Posterior cingulate gyrus (tissue), 11 donors: ENCODE measurements at regions of chr6 and their contacts with region 1.

Region 1: DNA sequence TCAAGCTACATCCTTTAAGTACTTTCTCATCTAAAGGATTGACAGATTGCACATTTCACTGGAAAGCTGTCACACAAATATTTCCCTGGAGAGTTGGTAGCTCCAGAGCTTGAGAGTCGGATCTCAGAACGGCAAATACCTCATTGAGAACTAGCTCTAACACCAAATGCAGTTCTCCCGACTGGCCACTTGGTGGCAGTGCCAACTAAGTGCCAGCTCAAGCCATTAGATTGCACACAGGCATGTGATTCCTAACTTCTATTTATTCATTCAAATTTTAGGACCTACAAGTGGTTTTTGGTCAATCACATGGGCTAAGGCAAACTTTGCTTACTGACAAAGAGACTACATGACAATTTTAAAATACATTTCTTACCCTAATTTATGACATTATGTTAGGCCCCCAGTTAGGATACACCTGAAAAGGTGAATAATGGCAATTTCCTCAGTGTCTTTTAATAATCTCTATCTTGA is 7.9 kb upstream of the MCHR2 start:
- DNase-seq: peak; percentile 36 to 93 (median 64)

Region 2: DNA sequence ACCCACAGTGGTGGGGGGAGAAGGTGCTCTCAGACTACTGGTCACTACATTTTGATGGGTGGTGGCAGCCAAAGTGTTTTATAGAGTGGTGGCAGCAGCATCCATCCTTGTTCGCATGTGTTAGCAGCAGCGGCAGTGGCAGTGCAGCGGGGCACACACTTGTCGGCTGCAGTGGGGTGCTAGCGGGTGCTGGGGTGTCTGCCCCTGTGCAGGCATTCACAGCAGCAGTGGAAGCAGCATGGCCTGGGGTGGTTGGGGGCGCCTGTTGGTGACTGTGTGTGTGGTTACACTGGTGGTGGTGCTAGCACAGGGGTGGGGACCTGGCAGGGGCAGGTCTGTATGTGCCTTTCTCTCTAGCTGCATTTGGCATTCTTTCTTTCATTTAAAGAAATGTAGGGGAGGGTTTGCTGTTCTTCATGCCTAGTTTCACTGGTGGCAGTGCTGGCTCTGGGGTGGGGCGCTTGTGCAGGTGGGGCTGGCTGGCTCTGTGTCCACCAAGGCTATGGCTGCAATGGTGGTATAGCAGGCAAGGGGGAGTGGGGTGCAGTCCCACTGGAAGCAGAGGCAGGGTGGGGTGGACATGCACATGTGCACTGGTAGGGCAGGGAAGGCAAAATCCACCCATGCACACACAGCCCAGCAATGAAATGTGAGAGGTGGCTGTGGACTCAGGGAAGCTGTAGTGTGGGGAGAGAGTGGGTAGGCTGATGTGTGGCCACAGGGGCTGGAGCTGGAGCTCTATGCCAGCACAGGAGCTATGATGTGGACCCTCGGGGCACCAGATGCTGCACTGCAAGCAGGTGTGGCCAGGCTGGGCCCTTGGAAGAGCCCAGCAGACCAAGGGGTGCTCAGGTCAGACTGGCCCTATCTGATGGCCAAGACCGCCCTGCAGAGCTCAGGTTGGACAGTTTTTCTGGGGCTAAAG is 222.1 kb before region 1 on chr6:
- intact Hi-C with region 1: no loop called
- DNase-seq: peak in 3 of 10 donors; percentile 43 to 62 (median 55)

Region 3: DNA sequence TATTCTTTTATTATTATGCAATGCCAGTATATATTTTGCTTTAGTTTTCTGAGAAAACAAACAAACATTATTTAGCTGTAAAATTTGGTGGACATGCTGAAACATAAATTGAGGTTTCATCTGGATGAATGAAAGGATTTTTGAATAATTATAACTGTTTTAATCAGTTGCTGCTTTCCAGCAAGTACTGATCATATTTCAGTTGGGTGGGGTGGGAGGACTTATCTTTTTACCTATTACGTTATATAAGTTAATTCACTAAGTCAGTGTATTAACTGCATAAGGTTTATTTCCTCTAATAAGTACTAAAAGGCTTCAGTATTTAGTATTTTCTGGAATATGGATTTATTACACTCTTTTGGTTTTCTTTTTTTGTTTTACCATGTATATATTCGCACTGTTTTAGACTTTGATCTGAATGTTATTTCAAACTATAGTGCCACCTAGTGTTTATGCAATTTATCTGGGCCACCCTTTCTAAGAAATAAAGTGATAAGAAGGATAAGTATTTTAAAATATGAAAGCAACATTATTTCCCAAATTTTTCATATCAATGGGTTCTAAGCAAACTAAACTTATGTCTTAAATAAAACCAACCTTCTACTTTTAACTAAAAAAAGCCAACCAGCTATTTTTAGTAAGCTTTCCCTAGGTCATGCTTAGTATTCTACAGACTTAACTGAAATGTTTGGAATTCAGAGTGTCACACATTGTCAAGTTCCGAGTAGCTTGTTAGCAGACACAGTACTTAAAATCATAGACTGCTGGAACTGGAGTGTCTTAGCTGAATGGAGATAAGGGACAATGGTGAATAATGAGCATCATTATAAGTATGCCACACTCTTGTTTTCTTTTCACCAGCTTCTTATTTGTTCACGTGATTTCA is 97.5 kb after region 1 on chr6:
- intact Hi-C with region 1: loop called (anchors 1 kb)
- DNase-seq: no peak

Region 4: GRCh38 chr6:100112855-100113508 is 111.0 kb after region 1 on chr6:
- intact Hi-C with region 1: no loop called
- DNase-seq: no peak

Region 5: DNA sequence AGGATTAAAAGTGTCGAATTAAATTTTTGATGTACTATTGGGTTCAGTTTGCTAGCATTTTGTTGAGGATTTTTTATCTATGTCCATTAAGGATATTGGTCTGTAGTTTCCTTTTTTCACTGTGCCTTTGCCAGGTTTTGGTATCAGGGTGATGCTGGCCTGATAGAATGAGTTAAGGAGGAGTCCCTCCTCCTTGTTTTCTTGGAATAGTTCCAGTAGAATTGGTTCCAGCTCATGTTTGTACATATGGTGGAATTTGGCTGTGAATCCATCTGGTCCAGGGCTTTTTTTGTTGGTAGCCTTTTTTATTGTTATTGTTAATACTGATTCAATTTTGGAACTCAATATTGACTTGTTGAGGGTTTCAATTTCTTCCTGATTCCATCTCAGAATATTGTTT is 320.9 kb after region 1 on chr6:
- intact Hi-C with region 1: no loop called
- DNase-seq: no peak

Region 6: DNA sequence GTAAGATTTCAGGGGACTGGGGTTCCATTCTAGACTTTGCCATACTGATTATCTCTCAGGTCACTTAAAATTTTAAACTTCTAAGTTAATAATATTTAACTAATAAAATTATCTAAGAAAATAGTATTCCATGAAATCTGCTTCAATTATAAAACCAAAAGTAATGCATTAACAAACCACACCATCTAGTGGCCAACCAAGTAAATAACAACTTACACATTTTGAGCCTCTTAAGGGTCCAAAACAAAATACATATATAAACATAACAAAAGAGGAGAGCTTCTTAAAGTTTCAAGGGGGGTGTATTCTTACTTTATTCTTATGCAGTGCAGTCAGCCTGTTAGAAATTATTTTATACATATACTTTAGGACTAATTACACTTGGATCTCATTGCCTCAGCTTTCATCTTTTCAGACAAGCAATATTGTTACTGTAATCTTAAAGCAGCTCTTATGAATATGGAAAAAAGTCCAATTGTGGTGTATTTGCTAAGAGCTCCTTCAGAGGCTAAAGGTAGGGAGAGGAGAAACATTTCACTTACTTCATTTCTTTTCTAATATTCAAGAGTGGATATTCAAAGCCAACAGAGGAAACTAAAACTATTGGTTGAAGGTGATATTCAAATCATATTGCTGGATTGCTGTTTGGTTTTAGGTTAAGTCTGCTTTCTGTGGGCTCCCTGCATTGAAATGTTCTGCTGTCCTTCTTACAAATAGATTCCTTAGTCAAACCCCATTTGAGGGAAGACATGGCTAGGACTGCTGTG is 662.5 kb after region 1 on chr6:
- intact Hi-C with region 1: loop called (anchors 10 kb)
- DNase-seq: no peak